ENCODE measurements at regions of chr3 and their contacts with region 1.

Region 1: DNA sequence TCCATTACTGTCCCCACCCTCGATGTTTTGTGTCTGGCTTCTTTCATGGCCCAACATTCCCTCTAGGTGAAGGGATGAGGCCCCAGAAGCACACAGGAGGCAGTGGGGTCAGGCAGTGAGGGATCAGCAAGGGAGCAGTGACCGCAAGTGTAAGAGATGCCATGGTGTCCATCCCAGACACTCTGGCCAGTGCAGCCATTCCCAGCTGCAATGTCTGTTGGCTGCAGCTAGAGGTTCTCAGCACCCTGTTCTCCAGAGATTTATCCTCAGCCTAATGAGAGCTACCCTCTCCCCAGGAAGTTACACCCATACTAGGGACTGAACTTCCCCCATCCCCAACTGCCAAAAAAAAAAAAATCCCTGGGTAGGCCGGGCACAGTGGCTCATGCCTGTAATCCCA is 40.2 kb downstream of the TRANK1 start:
- DNase-seq: no peak
- ATAC-seq: peak; percentile 77

Region 2: DNA sequence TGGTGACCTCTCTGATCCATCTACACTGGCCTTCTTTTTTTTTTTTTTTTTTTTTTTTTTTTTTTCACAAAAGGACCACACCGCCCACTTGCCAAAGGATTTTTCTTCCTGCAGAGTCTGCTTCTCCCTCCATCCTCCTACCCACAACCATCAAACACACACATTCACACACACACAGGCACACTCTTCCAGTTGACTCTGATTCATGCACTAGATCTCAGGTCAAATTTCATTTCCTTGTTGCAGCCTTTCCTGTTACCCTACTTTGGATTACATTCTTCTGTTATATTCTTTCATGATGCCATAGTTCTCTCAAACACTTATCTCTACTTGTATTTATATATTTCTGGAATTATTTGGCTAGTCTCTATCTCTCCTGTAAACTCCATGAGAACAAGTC is 390.5 kb before region 1 on chr3:
- intact Hi-C with region 1: no loop called
- DNase-seq: no peak
- ATAC-seq: no peak

Region 3: GRCh38 chr3:36677331-36678007 is 227.2 kb before region 1 on chr3:
- intact Hi-C with region 1: no loop called
- DNase-seq: no peak
- ATAC-seq: no peak

Region 4: DNA sequence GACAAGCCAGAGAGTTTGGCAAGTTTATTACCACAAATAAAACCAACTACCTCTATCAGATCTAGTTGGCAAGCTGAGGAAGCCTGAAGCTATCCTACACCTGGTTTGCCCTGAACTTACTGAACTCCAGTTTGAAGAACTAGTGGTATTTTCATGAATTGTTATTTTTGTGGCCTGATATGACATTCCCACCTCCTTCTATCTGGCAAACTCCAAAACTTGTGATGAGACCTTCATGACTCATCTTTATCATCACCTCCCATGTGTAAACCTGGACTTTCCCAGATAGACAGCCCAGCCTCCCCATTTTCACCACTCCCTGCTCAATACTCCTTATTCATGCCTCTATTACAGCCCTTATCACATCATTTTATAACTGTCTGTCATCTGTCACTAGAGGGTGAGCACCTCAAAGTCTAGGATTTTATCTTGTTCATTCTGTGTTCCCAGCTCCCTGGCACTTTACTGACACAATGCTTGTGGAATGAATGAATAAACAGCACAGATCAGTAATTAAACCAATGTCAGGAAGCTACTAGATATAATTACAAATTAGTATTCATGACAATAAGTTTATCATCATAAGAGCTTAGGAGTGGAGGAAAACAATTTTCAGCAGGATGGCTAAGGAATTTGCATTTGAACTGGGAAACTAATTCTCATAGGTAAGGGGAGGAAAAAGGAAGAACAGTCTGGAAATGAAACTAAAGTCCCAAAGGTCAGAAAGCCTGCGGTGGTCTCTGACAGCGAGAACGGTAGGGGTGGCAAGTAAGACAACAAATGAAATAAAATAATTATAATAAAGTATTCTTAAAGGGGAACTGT is 53.4 kb after region 1 on chr3:
- intact Hi-C with region 1: loop called (anchors 1 kb)
- DNase-seq: no peak
- ATAC-seq: no peak

Region 5: GRCh38 chr3:37054370-37054769 is 149.7 kb after region 1 on chr3:
- intact Hi-C with region 1: no loop called
- DNase-seq: no peak
- ATAC-seq: peak; percentile 84